HepG2 (cell line): ENCODE measurements at regions of chr19 and their contacts with region 1.

Region 1: DNA sequence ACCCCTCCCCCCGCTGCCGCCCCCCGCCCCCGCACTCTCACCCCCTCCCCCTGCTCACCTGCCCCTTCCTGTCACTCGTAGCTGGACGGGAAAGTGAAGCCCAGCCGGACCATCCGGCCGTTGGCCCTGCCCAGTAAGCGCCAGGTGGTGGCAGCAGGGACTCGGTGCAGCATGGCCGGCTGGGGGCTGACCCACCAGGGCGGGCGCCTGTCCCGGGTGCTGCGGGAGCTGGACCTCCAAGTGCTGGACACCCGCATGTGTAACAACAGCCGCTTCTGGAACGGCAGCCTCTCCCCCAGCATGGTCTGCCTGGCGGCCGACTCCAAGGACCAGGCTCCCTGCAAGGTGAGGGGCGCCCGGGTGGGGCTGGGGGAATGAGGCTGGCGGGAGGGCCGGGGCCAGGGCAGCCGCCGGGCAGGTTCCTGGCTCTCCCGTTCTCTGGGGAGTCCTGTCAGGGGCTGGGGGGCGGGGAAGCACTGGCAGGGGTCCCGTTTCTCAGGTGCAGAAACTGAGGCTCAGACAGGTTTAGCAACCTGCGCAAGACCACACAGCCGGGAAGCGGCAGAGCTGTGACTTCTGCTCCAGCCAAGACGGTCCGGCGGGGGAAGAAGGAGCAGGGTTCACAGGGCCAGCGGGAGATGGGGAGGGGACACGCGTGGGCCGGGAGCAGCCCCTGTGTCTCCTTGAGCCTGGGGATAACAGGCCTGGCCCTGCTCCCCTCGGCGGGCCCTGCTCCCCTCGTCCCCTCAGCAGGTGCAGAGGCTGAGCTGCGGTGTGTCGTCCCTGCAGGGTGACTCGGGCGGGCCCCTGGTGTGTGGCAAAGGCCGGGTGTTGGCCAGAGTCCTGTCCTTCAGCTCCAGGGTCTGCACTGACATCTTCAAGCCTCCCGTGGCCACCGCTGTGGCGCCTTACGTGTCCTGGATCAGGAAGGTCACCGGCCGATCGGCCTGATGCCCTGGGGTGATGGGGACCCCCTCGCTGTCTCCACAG is 5.3 kb downstream of the GZMM start:
- DNase-seq: no peak
- ATAC-seq: peak; percentile 19
- H3K4me3 ChIP-seq: no peak overlapping the region; a peak in 1 of 6 replicates
- H3K27ac ChIP-seq: no peak overlapping the region
- H3K4me1 ChIP-seq: peaks cover 16% of the 10 kb centered on the region
- H3K27me3 ChIP-seq: peaks cover 5 to 17% of the 10 kb centered on the region in 2 experiments; a peak in 3 of 5 replicates
- CTCF ChIP-seq: peak; percentile 61
- EP300 ChIP-seq: no peak
- POLR2A ChIP-seq: no peak
- RAD21 ChIP-seq: no peak

Region 2: GRCh38 chr19:604355-604754 is 55.2 kb after region 1 on chr19:
- CTCF ChIA-PET with region 1: interaction called, 23 read pairs
- POLR2A ChIA-PET with region 1: no interaction called
- in situ Hi-C with region 1: no loop called
- intact Hi-C with region 1: no loop called
- DNase-seq: no peak
- ATAC-seq: no peak
- H3K4me3 ChIP-seq: no peak overlapping the region
- H3K27ac ChIP-seq: no peak overlapping the region
- H3K4me1 ChIP-seq: no peaks in the 10 kb centered on the region
- H3K27me3 ChIP-seq: peaks cover 0 to 7% of the 10 kb centered on the region in 2 experiments; a peak in 1 of 5 replicates
- CTCF ChIP-seq: no peak
- EP300 ChIP-seq: no peak
- POLR2A ChIP-seq: no peak
- RAD21 ChIP-seq: no peak